ENCODE measurements at regions of chr2 and their contacts with region 1.

Region 1: GRCh38 chr2:174756743-174757142 is 7.5 kb downstream of the CHRNA1 start:
- DNase-seq: no peak
- ATAC-seq: no peak
- H3K4me3 ChIP-seq: no peak overlapping the region
- H3K4me3 Mint-ChIP-seq: no peak overlapping the region
- H3K27ac ChIP-seq: no peak overlapping the region
- H3K27ac Mint-ChIP-seq: no peak overlapping the region
- H3K4me1 ChIP-seq: peaks cover 20% of the 10 kb centered on the region
- H3K4me1 Mint-ChIP-seq: peaks cover 15% of the 10 kb centered on the region
- H3K27me3 ChIP-seq: no peaks in the 10 kb centered on the region
- H3K27me3 Mint-ChIP-seq: no peaks in the 10 kb centered on the region
- CTCF ChIP-seq: no peak

Region 2: GRCh38 chr2:173193925-173194324 is 1562.8 kb before region 1 on chr2:
- CTCF ChIA-PET with region 1: no interaction called
- POLR2A ChIA-PET with region 1: no interaction called
- intact Hi-C with region 1: no loop called
- DNase-seq: no peak
- ATAC-seq: no peak
- H3K4me3 ChIP-seq: no peak overlapping the region
- H3K4me3 Mint-ChIP-seq: no peak overlapping the region
- H3K27ac ChIP-seq: no peak overlapping the region
- H3K27ac Mint-ChIP-seq: no peak overlapping the region
- H3K4me1 ChIP-seq: no peaks in the 10 kb centered on the region
- H3K4me1 Mint-ChIP-seq: no peaks in the 10 kb centered on the region
- H3K27me3 ChIP-seq: no peaks in the 10 kb centered on the region
- H3K27me3 Mint-ChIP-seq: no peaks in the 10 kb centered on the region
- CTCF ChIP-seq: no peak

Region 3: DNA sequence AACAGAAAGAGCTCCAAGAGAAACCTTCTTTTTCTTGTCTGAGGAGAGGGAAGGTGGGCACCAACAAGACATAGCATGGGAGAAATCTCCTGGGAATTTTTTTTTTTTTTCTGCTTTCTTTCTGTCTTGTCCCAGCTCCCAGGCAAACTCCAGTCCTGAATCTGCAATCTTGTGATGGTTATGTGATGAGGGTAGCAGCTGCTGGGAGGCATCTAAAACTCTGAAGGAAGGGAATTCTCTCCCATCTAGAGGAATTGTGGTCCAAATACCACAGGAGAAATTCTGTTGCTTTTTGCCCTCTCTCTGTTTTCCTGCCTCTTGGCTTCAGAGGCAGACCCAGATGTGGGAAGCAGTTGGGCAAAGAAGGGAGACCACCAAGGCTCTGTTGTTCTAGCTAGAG is 344.5 kb before region 1 on chr2:
- CTCF ChIA-PET with region 1: no interaction called
- POLR2A ChIA-PET with region 1: no interaction called
- intact Hi-C with region 1: no loop called
- DNase-seq: no peak
- ATAC-seq: no peak
- H3K4me3 ChIP-seq: no peak overlapping the region
- H3K4me3 Mint-ChIP-seq: no peak overlapping the region
- H3K27ac ChIP-seq: no peak overlapping the region
- H3K27ac Mint-ChIP-seq: no peak overlapping the region
- H3K4me1 ChIP-seq: no peaks in the 10 kb centered on the region
- H3K4me1 Mint-ChIP-seq: no peaks in the 10 kb centered on the region
- H3K27me3 ChIP-seq: no peaks in the 10 kb centered on the region
- H3K27me3 Mint-ChIP-seq: no peaks in the 10 kb centered on the region
- CTCF ChIP-seq: no peak

Region 4: GRCh38 chr2:174729797-174730697 is 26.7 kb before region 1 on chr2:
- CTCF ChIA-PET with region 1: no interaction called
- POLR2A ChIA-PET with region 1: no interaction called
- intact Hi-C with region 1: no loop called
- DNase-seq: peak in 9 of 14 experiments; percentile 12 to 68 (median 43)
- ATAC-seq: peak; percentile 77
- H3K4me3 ChIP-seq: peak overlapping the region; percentile 76
- H3K4me3 Mint-ChIP-seq: peak overlapping the region; percentile 90
- H3K27ac ChIP-seq: no peak overlapping the region
- H3K27ac Mint-ChIP-seq: no peak overlapping the region
- H3K4me1 ChIP-seq: peaks cover 27% of the 10 kb centered on the region
- H3K4me1 Mint-ChIP-seq: peaks cover 18% of the 10 kb centered on the region
- H3K27me3 ChIP-seq: peaks cover 3 to 4% of the 10 kb centered on the region in 2 experiments
- H3K27me3 Mint-ChIP-seq: peaks cover 33% of the 10 kb centered on the region
- CTCF ChIP-seq: no peak

Region 5: GRCh38 chr2:174787487-174788205 is 30.9 kb after region 1 on chr2:
- CTCF ChIA-PET with region 1: no interaction called
- POLR2A ChIA-PET with region 1: no interaction called
- intact Hi-C with region 1: loop called in 1 of 2 experiments (anchors 1 kb)
- DNase-seq: no peak
- ATAC-seq: no peak
- H3K4me3 ChIP-seq: no peak overlapping the region
- H3K4me3 Mint-ChIP-seq: no peak overlapping the region
- H3K27ac ChIP-seq: no peak overlapping the region
- H3K27ac Mint-ChIP-seq: peak overlapping the region; percentile 28
- H3K4me1 ChIP-seq: peaks cover 14% of the 10 kb centered on the region
- H3K4me1 Mint-ChIP-seq: peaks cover 9% of the 10 kb centered on the region
- H3K27me3 ChIP-seq: no peaks in the 10 kb centered on the region
- H3K27me3 Mint-ChIP-seq: no peaks in the 10 kb centered on the region
- CTCF ChIP-seq: no peak